Endothelial cell of umbilical vein (primary cell): ENCODE measurements at regions of chr7 and their contacts with region 1.

Region 1: GRCh38 chr7:90312745-90313144 is 8.4 kb downstream of the FAM237B start:
- DNase-seq: peak; percentile 25
- H3K4me3 ChIP-seq: no peak overlapping the region
- H3K27ac ChIP-seq: no peak overlapping the region
- H3K4me1 ChIP-seq: no peaks in the 10 kb centered on the region
- H3K27me3 ChIP-seq: peaks cover 11 to 17% of the 10 kb centered on the region in 2 experiments
- CTCF ChIP-seq: peak; percentile 4 to 23
- POLR2A ChIP-seq: no peak

Region 2: DNA sequence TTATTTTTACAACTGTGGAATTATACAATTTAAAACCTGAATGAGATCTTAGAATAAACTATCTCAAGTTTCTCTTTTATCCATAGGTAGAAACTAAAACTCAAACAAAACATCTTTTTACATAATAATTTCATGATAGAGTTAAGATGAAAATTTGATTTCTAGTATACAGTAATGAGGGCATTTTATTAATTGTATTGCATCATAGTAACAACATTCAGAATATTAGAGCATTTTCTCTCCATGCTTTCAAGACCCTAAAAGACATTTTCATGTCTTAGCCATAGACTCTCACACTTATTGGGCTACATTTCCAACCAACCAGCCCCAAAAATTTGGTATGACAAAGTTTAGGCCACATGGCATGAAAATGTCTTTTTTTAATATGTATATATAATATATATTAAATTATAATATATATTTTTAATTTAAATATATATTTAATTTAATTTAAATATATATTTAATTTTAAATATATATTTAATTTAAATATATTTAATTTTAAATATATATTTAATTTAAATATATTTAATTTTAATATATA is 354.1 kb before region 1 on chr7:
- CTCF ChIA-PET with region 1: no interaction called
- POLR2A ChIA-PET with region 1: no interaction called
- dilution Hi-C with region 1: no loop called
- intact Hi-C with region 1: no loop called
- DNase-seq: no peak
- H3K4me3 ChIP-seq: no peak overlapping the region
- H3K27ac ChIP-seq: no peak overlapping the region
- H3K4me1 ChIP-seq: no peaks in the 10 kb centered on the region
- H3K27me3 ChIP-seq: no peaks in the 10 kb centered on the region
- CTCF ChIP-seq: no peak
- POLR2A ChIP-seq: no peak

Region 3: GRCh38 chr7:90430614-90431471 is 118.1 kb after region 1 on chr7:
- CTCF ChIA-PET with region 1: interaction called, 248 read pairs
- POLR2A ChIA-PET with region 1: no interaction called
- dilution Hi-C with region 1: no loop called
- intact Hi-C with region 1: loop called (anchors 1 kb)
- DNase-seq: no peak
- H3K4me3 ChIP-seq: no peak overlapping the region
- H3K27ac ChIP-seq: no peak overlapping the region
- H3K4me1 ChIP-seq: peaks cover 5% of the 10 kb centered on the region
- H3K27me3 ChIP-seq: peaks cover 0 to 4% of the 10 kb centered on the region in 2 experiments
- CTCF ChIP-seq: no peak
- POLR2A ChIP-seq: no peak

Region 4: GRCh38 chr7:90516257-90516656 is 203.5 kb after region 1 on chr7:
- CTCF ChIA-PET with region 1: no interaction called
- POLR2A ChIA-PET with region 1: no interaction called
- dilution Hi-C with region 1: no loop called
- intact Hi-C with region 1: no loop called
- DNase-seq: no peak
- H3K4me3 ChIP-seq: no peak overlapping the region
- H3K27ac ChIP-seq: no peak overlapping the region
- H3K4me1 ChIP-seq: no peaks in the 10 kb centered on the region
- H3K27me3 ChIP-seq: no peaks in the 10 kb centered on the region
- CTCF ChIP-seq: no peak
- POLR2A ChIP-seq: no peak

Region 5: DNA sequence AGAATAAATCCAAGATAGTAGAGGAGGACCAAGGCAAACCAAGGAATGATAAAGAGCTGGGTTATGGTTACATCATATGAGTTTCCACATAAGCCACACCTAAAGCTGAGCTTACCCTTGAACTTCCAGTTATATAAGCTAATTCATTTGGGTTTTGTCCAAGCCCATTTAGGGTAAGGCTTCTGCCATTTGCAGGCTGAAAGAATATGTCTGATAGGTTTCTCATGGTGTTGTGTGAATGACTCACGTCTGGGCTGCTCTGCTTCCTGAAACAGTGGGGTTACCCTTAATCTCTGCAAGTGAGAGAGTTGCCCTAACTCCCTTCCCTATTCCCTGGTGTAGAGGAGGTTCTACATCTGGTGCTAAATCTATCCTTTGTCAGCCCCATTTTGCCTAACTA is 217.5 kb after region 1 on chr7:
- CTCF ChIA-PET with region 1: no interaction called
- POLR2A ChIA-PET with region 1: no interaction called
- dilution Hi-C with region 1: no loop called
- intact Hi-C with region 1: no loop called
- DNase-seq: no peak
- H3K4me3 ChIP-seq: no peak overlapping the region
- H3K27ac ChIP-seq: no peak overlapping the region
- H3K4me1 ChIP-seq: no peaks in the 10 kb centered on the region
- H3K27me3 ChIP-seq: peaks cover 5 to 8% of the 10 kb centered on the region in 2 experiments
- CTCF ChIP-seq: no peak
- POLR2A ChIP-seq: no peak